Naive thymus-derived CD4-positive, alpha-beta T cell (primary cell): ENCODE measurements at regions of chr19 and their contacts with region 1.

Region 1: DNA sequence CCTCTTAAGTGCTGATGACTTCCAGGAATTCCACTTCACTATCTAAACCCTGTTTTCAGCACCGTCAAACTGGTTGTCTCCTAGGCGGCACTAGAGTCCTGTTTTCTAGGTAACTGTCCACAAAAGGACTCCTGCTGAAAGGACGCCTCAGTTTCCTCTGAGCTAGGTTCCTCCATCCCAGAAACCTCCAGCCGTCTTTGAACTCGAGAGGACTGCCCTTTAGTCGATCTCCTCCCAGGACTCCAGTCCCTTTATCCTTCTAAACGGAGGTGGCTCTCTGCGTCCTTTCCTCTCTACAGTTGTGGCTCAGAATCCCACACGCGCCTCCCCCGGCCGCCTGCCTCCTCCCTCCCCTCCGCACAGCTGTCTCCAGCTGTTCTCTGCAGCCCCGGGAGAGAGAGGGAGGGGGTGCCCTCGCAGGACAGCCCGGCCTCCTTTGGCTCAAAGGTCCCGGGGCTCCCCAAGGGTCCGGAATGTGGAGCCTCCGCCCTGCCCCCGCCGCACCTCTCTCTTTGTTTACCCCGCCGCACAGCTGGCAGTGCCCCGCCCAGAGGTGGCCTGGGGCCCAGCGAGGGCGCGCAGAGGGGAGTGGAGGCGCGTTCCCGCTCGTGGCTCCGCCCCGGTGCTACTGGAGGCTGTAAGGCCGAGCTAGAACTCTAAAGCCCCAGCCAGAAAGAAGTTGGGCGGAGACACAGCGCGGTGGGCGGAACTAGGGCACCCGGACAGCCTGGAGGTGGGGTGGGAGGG is 2.4 kb downstream of the LTBP4 start:
- DNase-seq: peak; percentile 82 to 96 (median 93)
- ATAC-seq: peak; percentile 86
- H3K4me3 ChIP-seq: peak overlapping the region; percentile 72
- H3K4me3 Mint-ChIP-seq: peak overlapping the region; percentile 84 to 98 (median 88)
- H3K27ac ChIP-seq: peak overlapping the region; percentile 35
- H3K27ac Mint-ChIP-seq: peak overlapping the region; percentile 72 to 93 (median 86)
- H3K4me1 ChIP-seq: peaks cover 54 to 61% of the 10 kb centered on the region in 2 donors
- H3K4me1 Mint-ChIP-seq: peaks cover 20 to 84% (median 71%) of the 10 kb centered on the region in 7 donors
- H3K27me3 ChIP-seq: peaks cover 10 to 21% of the 10 kb centered on the region in 2 donors
- H3K27me3 Mint-ChIP-seq: peaks cover 24 to 39% (median 30%) of the 10 kb centered on the region in 5 donors

Region 2: GRCh38 chr19:40139533-40140287 is 463.9 kb before region 1 on chr19:
- CTCF ChIA-PET with region 1: no interaction called
- POLR2A ChIA-PET with region 1: no interaction called
- intact Hi-C with region 1: loop called in 1 of 2 experiments (anchors 10 kb)
- DNase-seq: peak in 6 of 9 donors; percentile 38 to 63 (median 55)
- ATAC-seq: peak; percentile 43
- H3K4me3 ChIP-seq: no peak overlapping the region
- H3K4me3 Mint-ChIP-seq: peak overlapping the region in 1 of 10 donors; percentile 16
- H3K27ac ChIP-seq: no peak overlapping the region
- H3K27ac Mint-ChIP-seq: peak overlapping the region in 5 of 9 donors; percentile 0 to 59 (median 31)
- H3K4me1 ChIP-seq: peaks cover 16 to 18% of the 10 kb centered on the region in 2 donors
- H3K4me1 Mint-ChIP-seq: peaks cover 0 to 29% (median 18%) of the 10 kb centered on the region in 7 donors
- H3K27me3 ChIP-seq: no peaks in the 10 kb centered on the region
- H3K27me3 Mint-ChIP-seq: peaks cover 0 to 21% (median 11%) of the 10 kb centered on the region in 5 donors

Region 3: DNA sequence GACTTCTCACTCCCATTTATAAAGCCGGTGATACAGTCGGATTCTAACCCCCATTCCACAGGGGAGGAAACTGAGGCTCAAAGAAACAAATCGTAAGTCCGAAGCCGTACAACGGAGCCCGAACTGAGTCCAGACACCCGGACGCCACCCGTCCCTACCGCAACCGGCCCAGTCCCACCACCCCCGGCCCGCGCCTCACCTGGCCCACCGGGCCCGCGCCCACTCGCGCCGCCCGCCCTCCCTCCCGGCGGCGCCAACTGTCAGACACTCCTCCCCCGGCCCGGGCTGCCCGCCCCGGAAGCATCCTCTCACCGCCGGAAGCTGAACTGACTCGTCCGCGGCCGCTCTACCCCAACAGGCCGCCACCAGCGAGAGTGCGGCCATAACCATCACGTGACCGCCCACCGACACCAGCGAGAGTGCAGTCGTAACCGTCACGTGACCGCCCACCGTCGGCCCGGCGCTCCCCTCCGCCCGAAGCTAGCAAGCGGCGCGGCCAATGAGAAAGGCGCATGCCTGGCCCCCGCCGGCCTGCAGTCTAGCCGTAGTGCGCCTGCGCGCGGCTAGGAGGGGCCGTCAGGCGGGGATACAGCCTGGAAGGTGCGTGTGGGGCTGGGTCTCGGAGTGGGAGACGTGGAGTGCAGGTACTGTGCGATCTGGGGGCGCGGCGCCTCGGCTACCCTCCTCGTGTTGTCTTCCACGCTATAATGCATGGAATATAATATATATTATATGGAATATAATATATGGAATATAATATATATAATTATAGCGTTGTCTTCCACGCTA is 255.2 kb before region 1 on chr19 and contains the starts of genes C19orf47 and PLD3:
- CTCF ChIA-PET with region 1: interaction called, 3 read pairs
- POLR2A ChIA-PET with region 1: no interaction called
- intact Hi-C with region 1: loop called in 1 of 2 experiments (anchors 2 kb)
- DNase-seq: peak; percentile 92 to 99 (median 97)
- ATAC-seq: peak; percentile 97
- H3K4me3 ChIP-seq: peak within 1 kb of the TSS; percentile 61
- H3K4me3 Mint-ChIP-seq: peak within 1 kb of the TSS; percentile 83 to 99 (median 96)
- H3K27ac ChIP-seq: peak within 1 kb of the TSS; percentile 86
- H3K27ac Mint-ChIP-seq: peak within 1 kb of the TSS; percentile 81 to 98 (median 93)
- H3K4me1 ChIP-seq: peaks cover 7 to 14% of the 10 kb centered on the region in 2 donors
- H3K4me1 Mint-ChIP-seq: peaks cover 20 to 51% (median 44%) of the 10 kb centered on the region in 7 donors
- H3K27me3 ChIP-seq: no peaks in the 10 kb centered on the region
- H3K27me3 Mint-ChIP-seq: peaks cover 0 to 2% (median 0%) of the 10 kb centered on the region in 5 donors
- total RNA-seq, gene C19orf47: 12.6 to 20.3 (median 15.8) TPM
- total RNA-seq, gene PLD3: 75.4 to 137 (median 114) TPM

Region 4: DNA sequence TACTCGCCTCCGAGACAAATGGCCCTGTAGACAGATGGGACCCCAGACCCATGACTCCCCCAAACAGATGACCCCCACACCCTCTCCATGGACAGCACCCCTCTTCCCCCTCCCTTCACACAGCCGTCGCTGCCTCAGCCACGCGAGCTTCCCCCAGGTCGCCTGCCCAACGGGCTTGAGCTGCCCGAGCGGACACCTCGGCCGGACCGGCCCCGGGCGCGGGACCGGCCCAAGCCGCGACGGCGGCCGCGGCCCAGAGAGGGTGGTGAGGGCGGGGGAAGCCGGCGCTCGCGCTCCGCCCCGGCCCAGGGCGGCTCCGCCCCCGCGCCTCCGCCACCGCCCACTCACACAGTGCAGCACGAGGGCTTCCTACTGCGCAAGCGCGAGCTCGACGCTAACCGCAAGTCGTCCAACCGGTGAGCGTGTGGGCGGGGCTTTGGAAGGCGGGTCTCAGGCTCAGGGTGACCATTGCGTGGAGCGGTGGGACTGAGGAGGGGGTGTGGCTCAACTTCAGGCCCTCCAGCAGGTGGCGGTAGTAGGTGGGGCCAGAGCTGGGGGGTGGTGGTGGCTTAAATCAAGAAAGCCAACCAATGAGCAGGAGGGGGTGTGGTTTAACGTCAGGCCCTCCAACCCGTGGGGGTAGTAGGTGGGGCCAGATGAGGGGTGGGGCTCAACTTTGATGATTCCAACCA is 33.1 kb before region 1 on chr19:
- CTCF ChIA-PET with region 1: interaction called, 3 read pairs
- POLR2A ChIA-PET with region 1: interaction called, 11 read pairs
- intact Hi-C with region 1: loop called in 1 of 2 experiments (anchors 1 kb)
- DNase-seq: peak; percentile 90 to 97 (median 96)
- ATAC-seq: peak; percentile 94
- H3K4me3 ChIP-seq: peak overlapping the region; percentile 45
- H3K4me3 Mint-ChIP-seq: peak overlapping the region; percentile 50 to 85 (median 82)
- H3K27ac ChIP-seq: no peak overlapping the region
- H3K27ac Mint-ChIP-seq: peak overlapping the region; percentile 55 to 93 (median 81)
- H3K4me1 ChIP-seq: peaks cover 9 to 13% of the 10 kb centered on the region in 2 donors
- H3K4me1 Mint-ChIP-seq: peaks cover 10 to 27% (median 19%) of the 10 kb centered on the region in 7 donors
- H3K27me3 ChIP-seq: no peaks in the 10 kb centered on the region
- H3K27me3 Mint-ChIP-seq: peaks cover 9 to 41% (median 17%) of the 10 kb centered on the region in 5 donors

Region 5: DNA sequence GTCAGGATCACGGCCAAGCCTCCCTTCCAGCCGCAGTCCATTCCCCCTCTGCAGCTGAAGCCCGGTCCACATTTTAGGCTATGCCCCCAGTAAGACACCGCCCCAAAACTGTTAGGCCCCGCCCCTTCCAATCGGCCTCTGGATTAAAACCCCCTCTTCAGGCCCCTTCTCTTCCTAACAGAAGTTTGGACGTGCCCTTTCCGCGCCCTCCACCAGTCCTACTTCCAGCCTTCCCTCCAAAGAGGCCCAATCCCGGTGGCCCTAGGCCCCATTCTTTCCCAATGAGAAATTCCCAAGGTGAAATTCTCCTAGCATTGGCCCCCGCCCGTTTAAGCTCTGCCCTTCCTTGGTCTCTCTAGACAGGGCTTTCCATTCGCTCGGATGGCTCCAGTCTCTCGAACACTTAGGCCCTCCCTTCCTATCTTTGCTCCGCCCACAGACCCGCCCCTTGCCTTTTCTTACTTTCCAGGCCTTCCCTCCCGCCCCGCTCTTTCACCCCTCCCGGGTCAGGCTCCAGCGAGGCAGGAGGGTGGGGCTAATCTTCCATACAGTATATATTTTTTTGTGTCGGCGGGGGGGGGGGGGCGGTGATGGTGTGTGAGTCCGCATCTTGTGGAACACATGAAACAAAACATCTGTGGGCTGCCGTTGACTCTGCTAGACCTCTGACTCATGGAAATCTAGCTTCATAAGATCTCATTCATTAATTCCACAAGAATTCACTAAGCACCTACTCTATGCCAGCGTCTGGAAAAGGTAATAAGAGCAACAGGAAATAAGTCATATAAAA is 11.3 kb after region 1 on chr19:
- CTCF ChIA-PET with region 1: interaction called, 14 read pairs
- POLR2A ChIA-PET with region 1: interaction called, 34 read pairs
- intact Hi-C with region 1: loop called (anchors 1 kb)
- DNase-seq: peak in 6 of 9 donors; percentile 52 to 92 (median 61)
- ATAC-seq: no peak
- H3K4me3 ChIP-seq: peak overlapping the region; percentile 96
- H3K4me3 Mint-ChIP-seq: peak overlapping the region; percentile 90 to 97 (median 94)
- H3K27ac ChIP-seq: peak overlapping the region; percentile 78
- H3K27ac Mint-ChIP-seq: peak overlapping the region; percentile 77 to 96 (median 93)
- H3K4me1 ChIP-seq: peaks cover 20 to 26% of the 10 kb centered on the region in 2 donors
- H3K4me1 Mint-ChIP-seq: peaks cover 26 to 50% (median 39%) of the 10 kb centered on the region in 7 donors
- H3K27me3 ChIP-seq: no peaks in the 10 kb centered on the region
- H3K27me3 Mint-ChIP-seq: no peaks in the 10 kb centered on the region

Region 6: GRCh38 chr19:40640744-40641143 is 37.2 kb after region 1 on chr19:
- CTCF ChIA-PET with region 1: interaction called, 42 read pairs
- POLR2A ChIA-PET with region 1: interaction called, 11 read pairs
- intact Hi-C with region 1: no loop called
- DNase-seq: peak in 2 of 9 donors; percentile 7 to 8
- ATAC-seq: no peak
- H3K4me3 ChIP-seq: no peak overlapping the region
- H3K4me3 Mint-ChIP-seq: no peak overlapping the region
- H3K27ac ChIP-seq: no peak overlapping the region
- H3K27ac Mint-ChIP-seq: peak overlapping the region in 3 of 9 donors; percentile 33 to 73 (median 60)
- H3K4me1 ChIP-seq: no peaks in the 10 kb centered on the region
- H3K4me1 Mint-ChIP-seq: peaks cover 0 to 12% (median 6%) of the 10 kb centered on the region in 7 donors
- H3K27me3 ChIP-seq: no peaks in the 10 kb centered on the region
- H3K27me3 Mint-ChIP-seq: peaks cover 0 to 8% (median 2%) of the 10 kb centered on the region in 5 donors

Region 7: GRCh38 chr19:41554907-41555306 is 951.3 kb after region 1 on chr19:
- CTCF ChIA-PET with region 1: no interaction called
- POLR2A ChIA-PET with region 1: no interaction called
- intact Hi-C with region 1: loop called in 1 of 2 experiments (anchors 10 kb)
- DNase-seq: peak in 7 of 9 donors; percentile 62 to 78 (median 73)
- ATAC-seq: peak; percentile 88
- H3K4me3 ChIP-seq: peak overlapping the region; percentile 77
- H3K4me3 Mint-ChIP-seq: peak overlapping the region; percentile 39 to 100 (median 97)
- H3K27ac ChIP-seq: peak overlapping the region; percentile 88
- H3K27ac Mint-ChIP-seq: peak overlapping the region; percentile 25 to 97 (median 95)
- H3K4me1 ChIP-seq: peaks cover 50 to 65% of the 10 kb centered on the region in 2 donors
- H3K4me1 Mint-ChIP-seq: peaks cover 43 to 76% (median 69%) of the 10 kb centered on the region in 7 donors
- H3K27me3 ChIP-seq: no peaks in the 10 kb centered on the region
- H3K27me3 Mint-ChIP-seq: no peaks in the 10 kb centered on the region